Activated T-helper 1 cell treated with anti-CD3 and anti-CD28 coated beads, Interleukin-12 subunit alpha, Interleukin-12 subunit beta, Interleukin-2, Interleukin-4 antibody, amounts not matched to agents 30 ng/mL and 10 ng/mL and 1 ng/mL, durations not matched to agents 14 hours and 24 hours and 36 hours (primary cell): ENCODE measurements at regions of chr1 and their contacts with region 1.

Region 1: DNA sequence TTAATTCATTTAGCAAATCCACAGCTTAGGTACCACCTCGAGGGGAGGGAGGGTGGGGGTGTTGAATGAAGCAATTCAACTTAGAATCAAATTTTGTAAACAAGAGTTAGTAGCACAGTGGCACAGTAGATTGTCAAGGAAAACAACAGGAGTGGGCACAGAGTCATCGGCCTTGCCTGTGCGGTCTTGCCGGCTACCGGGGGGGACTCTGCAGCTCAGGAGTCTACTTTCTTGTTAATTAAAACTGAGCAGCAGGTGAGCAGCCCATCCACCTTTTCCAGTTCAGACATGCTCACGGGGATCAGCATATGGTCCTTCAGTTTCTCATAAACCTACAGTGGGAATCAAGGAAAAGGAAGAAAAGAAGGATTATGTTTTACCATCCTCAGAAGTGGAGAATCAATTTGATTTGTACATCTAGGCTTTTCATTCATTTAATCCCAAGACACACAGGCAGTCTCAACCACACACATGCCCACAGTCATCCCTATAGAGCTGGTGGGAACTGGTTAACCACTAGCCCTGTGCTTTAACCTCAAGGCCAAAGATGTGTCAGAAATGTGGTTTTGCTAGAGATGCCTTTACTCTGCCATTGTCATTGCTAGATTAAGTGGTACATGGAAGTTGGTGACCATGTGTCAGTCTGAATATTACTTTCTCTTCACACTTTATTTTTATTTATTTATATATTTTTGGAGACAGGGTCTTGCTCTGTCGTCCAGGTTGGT is 45.0 kb upstream of the BCL10 start:
- DNase-seq: no peak
- H3K4me3 Mint-ChIP-seq: no peak overlapping the region
- H3K27ac Mint-ChIP-seq: no peak overlapping the region
- H3K4me1 Mint-ChIP-seq: peaks cover 10% of the 10 kb centered on the region
- H3K27me3 Mint-ChIP-seq: peaks cover 51% of the 10 kb centered on the region

Region 2: DNA sequence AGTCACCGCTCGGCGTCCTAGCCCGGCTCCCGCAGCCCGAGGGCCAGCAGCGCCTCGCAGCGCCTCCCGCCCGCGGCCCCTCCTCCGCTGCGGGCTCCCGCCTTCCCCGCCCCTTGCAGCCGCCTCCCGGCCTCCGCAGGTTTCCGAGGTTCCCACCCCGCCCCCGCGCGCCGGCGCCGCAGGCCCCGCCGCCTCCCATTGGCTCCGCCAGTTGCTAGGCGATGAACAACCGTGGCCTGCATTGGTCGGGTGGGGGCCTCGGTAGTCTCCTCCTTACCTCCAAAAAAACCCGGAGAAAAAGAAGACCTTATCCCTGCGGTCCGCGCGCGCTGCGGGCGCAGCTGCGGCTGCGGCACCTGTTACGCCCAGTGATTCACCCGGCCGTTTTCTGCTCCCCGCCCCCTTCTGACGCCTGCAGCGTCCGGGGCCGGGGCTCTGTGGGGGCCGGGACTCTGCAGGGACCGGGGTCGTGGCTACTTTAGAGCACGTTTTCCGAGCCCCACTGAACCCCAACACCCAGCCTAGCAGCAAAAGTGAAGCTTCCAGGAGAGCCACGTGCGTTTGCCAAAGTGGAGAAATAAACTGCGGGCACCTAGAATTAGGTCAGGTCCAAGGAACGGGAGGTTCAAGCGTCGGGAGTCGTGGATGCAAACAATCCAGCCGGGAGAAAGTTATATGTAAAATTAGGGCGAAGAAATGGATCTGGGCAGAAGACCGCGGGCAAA is 630.8 kb before region 1 on chr1 and contains the start of gene SSX2IP:
- intact Hi-C with region 1: no loop called
- DNase-seq: peak; percentile 98
- H3K4me3 Mint-ChIP-seq: peak within 1 kb of the TSS; percentile 94
- H3K27ac Mint-ChIP-seq: peak within 1 kb of the TSS; percentile 95
- H3K4me1 Mint-ChIP-seq: peaks cover 59% of the 10 kb centered on the region
- H3K27me3 Mint-ChIP-seq: no peaks in the 10 kb centered on the region
- total RNA-seq, gene SSX2IP: 11.1 and 15.0 TPM in 2 replicates

Region 3: DNA sequence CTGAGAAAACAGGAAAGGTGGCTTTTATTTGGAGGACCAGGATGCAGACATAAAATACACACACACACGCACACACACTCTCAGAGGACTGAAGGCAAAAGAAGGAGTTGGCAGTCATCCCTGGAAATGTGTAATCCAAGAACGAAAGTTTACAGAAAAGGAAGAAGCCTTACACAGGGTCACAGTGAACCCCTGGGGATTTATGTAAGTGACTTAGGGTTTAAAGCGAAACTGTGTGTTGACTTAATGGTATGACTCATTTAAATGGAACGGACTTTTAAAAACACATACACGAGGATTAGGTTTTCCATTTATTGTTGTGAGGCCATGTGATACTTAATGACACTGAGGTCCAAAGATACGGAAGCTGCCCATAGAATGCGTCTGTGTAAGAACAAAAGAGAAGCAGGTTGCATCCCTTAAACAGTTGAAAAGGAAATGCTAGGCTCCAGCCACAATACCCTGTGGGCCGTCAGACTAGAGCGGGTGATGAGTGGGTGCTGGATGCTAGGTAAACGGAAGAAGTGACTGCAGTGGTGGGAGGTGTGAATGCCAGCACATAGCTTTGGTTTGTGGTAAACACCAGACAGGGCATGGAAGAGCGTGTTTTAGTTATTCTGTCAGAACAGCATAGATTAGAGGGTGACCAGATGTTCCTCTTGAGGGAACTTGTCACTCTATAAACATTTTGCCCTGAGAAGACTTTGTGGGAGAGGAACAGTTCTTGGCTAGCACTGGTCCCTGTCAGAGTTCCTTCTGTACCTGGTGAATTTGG is 23.4 kb before region 1 on chr1:
- intact Hi-C with region 1: loop called (anchors 1 kb)
- DNase-seq: peak; percentile 62
- H3K4me3 Mint-ChIP-seq: peak overlapping the region; percentile 1
- H3K27ac Mint-ChIP-seq: peak overlapping the region; percentile 80
- H3K4me1 Mint-ChIP-seq: peaks cover 34% of the 10 kb centered on the region
- H3K27me3 Mint-ChIP-seq: peaks cover 47% of the 10 kb centered on the region